Activated T-helper 2 cell treated with anti-CD3 and anti-CD28 coated beads, Interferon-gamma antibody, Interleukin-2, Interleukin-4, amounts not matched to agents 10 μg/mL and 5 μg/mL and 100 μg/mL, durations not matched to agents 14 hours and 24 hours and 36 hours (primary cell): ENCODE measurements at regions of chr19 and their contacts with region 1.

Region 1: DNA sequence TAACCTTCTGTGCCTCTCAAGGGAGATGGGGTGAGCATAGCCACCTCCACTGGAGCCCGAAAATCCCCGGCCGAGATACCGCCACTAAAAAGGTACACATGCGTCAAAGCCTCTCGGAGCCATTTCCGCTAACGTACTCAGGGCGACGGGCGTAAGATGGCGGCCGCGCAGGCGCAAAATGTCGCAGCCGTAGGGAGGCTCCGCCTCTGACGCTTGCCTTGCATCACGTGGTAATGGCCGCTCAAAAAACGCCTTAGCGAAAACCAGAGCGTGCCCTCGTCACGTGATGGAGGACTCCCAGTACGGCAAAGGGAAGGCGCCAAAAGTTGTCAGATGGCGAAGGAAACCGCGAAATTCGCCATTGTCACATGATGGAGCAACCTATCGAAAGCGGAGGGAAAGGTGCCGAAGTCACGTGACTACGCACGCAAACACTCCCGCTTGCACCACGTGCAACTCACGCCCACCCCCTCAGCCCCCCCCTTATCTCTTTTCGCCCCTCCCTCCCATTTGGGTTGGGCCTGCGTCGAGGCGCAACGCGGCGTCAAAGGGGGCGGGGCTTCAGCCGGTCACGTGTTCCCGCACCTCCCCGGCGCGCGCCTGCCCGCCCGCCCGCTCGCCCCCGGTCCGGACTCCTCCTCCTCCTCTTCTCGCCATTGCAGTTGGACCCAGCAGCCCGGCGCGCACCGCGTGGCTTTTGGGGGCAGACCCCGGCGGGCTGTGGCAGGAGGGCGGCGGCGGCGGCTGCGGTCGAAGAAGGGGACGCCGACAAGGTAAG is at the start of gene ILF3:
- DNase-seq: peak; percentile 100
- H3K4me3 Mint-ChIP-seq: peak within 1 kb of the TSS; percentile 95
- H3K27ac Mint-ChIP-seq: peak within 1 kb of the TSS; percentile 98
- H3K4me1 Mint-ChIP-seq: peaks cover 24% of the 10 kb centered on the region
- H3K27me3 Mint-ChIP-seq: no peaks in the 10 kb centered on the region
- total RNA-seq, gene ILF3: 509 and 523 TPM in 2 replicates

Region 2: GRCh38 chr19:10403137-10404021 is 250.5 kb before region 1 on chr19 and contains the start of gene CDC37:
- intact Hi-C with region 1: loop called (anchors 10 kb)
- DNase-seq: peak; percentile 98
- H3K4me3 Mint-ChIP-seq: peak within 1 kb of the TSS; percentile 96
- H3K27ac Mint-ChIP-seq: peak within 1 kb of the TSS; percentile 87
- H3K4me1 Mint-ChIP-seq: peaks cover 41% of the 10 kb centered on the region
- H3K27me3 Mint-ChIP-seq: no peaks in the 10 kb centered on the region
- total RNA-seq, gene CDC37: 285 and 300 TPM in 2 replicates

Region 3: GRCh38 chr19:10565567-10566407 is 88.1 kb before region 1 on chr19 and contains the start of gene KRI1:
- intact Hi-C with region 1: loop called (anchors 1 kb)
- DNase-seq: peak; percentile 99
- H3K4me3 Mint-ChIP-seq: peak within 1 kb of the TSS; percentile 91
- H3K27ac Mint-ChIP-seq: peak within 1 kb of the TSS; percentile 91
- H3K4me1 Mint-ChIP-seq: peaks cover 38% of the 10 kb centered on the region
- H3K27me3 Mint-ChIP-seq: no peaks in the 10 kb centered on the region
- total RNA-seq, gene KRI1: 66.7 and 69.5 TPM in 2 replicates

Region 4: DNA sequence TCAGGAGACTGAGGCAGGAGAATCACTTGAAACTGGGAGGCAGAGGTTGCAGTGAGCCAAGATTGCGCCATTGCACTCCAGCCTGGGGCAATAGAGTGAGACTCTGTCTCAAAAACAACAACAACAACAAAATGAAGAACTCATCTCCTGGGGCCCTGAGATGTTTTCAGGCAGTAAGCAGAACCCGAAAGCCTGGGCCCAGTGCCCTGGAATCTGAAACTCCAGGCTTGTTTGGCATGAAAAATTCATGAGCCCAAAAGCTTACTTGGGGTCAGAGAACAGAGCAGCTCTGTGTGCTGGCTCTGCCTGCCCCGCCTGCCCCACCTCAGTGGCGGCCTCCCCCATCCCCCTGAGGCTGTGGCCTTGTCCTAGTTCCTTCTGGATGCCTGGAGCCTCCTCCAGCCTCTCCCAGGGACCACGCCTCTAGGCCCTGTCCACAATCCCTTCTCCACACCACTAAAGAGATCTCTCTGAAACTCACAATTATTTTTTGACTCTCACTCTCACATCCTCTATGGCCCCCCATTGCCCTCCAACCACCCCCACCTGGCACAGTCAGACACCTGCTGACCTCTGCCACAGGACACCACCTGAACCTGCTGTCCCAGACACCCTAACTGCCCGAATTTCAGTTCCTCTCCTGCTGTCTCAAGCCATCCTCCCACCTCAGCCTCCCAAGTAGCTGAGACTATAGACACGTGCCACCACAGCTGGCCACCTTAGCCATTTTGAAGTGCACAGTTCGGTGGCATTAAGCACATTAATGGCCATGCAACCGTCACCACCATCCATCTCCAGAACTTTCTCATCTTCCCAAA is 59.9 kb before region 1 on chr19:
- intact Hi-C with region 1: no loop called
- DNase-seq: no peak
- H3K4me3 Mint-ChIP-seq: no peak overlapping the region
- H3K27ac Mint-ChIP-seq: peak overlapping the region; percentile 40
- H3K4me1 Mint-ChIP-seq: peaks cover 19% of the 10 kb centered on the region
- H3K27me3 Mint-ChIP-seq: no peaks in the 10 kb centered on the region

Region 5: GRCh38 chr19:10695401-10696398 is 41.8 kb after region 1 on chr19:
- intact Hi-C with region 1: loop called (anchors 5 kb)
- DNase-seq: peak; percentile 90
- H3K4me3 Mint-ChIP-seq: peak overlapping the region; percentile 82
- H3K27ac Mint-ChIP-seq: no peak overlapping the region
- H3K4me1 Mint-ChIP-seq: peaks cover 8% of the 10 kb centered on the region
- H3K27me3 Mint-ChIP-seq: no peaks in the 10 kb centered on the region

Region 6: DNA sequence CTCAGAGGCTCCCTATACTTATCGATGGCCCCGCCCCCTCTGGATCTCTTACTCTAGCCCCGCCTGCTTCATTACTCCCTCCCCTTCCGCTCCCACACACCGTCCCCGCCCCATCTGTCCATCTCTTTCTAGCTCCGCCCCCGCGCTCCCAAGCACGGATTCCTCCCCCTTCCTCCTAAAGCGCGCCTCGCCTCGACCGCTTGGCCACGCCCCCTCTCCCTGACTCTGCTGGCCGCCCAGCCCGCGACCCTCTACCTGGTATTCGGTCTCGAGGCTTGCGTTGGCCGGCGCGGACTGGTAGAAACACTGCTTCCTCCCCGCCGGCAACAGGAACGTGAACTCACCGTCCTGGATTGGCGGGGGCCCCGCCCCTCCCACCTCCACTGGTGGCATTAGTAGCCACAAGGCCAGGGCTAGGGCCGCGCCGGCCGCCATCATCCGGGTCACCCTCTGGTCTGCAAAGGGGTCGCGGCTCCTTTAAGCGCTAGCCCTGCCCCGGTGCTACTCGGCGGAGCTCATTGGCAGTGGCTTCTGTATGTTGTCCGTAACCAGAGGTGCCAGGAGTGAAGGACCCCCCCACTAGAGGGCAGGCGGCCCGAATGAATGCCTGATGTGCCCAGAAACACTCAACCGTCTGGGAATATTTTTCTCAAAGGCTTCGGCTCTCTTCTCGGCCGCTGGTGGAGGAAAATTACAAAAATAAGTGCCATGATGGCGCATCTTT is 182.0 kb after region 1 on chr19 and contains the start of gene TMED1:
- intact Hi-C with region 1: loop called (anchors 5 kb)
- DNase-seq: peak; percentile 95
- H3K4me3 Mint-ChIP-seq: peak within 1 kb of the TSS; percentile 92
- H3K27ac Mint-ChIP-seq: peak within 1 kb of the TSS; percentile 99
- H3K4me1 Mint-ChIP-seq: peaks cover 10% of the 10 kb centered on the region
- H3K27me3 Mint-ChIP-seq: no peaks in the 10 kb centered on the region
- total RNA-seq, gene TMED1: 16.7 and 17.9 TPM in 2 replicates